Activated B cell treated with CpG ODN at 0.5 μM for 24 hours (primary cell): ENCODE measurements at regions of chr15 and their contacts with region 1.

Region 1: DNA sequence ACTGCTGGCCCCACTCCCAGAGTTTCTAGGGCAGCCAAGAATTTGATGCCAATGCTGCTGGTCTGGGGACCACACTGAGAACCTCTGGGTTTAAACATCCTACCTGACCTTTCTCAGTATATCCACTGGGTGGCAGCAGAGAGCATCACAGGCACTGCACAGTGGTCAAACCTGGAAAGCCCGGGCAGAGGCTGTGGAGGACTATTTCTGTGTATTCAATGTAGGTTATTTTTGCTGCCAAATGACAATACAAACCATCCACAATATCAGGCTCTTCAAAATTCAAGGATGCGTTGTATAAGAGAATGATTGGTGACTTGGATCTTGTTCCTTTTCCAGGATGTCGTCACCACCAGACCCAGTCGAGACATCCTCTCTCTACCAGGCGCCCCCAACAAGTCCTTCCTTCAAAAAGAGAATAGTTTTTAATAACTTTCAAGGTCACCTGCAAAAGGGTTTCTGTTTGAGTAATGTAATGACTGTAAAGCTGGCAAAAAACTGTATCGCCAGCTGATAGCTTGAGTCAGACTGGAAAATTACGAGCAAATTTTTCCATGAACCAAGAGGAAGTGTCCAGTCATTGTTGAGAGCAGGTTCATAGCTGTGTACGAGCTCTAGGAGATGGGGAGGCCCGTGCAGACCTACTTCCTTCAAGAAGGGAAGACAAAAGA is 30.5 kb upstream of the MYZAP start:
- DNase-seq: peak; percentile 32
- ATAC-seq: peak; percentile 84
- H3K4me3 Mint-ChIP-seq: peak overlapping the region; percentile 56
- H3K27ac Mint-ChIP-seq: peak overlapping the region; percentile 68
- H3K4me1 Mint-ChIP-seq: peaks cover 37% of the 10 kb centered on the region
- H3K27me3 Mint-ChIP-seq: peaks cover 6% of the 10 kb centered on the region
- CTCF ChIP-seq: peak; percentile 53

Region 2: DNA sequence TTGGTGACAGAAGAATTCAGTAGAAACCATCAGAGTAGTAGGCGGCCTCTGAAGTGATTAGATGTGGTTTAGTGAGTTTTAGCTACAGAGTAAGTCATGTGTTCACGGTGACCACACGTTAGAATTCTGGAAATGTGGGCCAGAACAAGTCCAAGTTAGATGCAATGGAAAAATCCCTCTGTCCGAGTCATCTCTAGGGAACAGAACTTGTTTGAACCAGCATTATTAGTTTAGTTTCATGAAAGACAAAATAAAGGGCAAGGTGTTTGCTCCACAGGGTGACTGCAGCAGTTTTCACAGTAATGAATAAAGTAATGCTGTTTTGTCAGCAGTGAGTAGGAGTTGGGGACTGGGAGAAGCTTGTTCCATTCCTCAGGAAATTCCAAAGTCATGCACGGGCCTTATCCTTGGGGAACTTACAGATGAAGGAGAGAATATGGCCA is 84.6 kb before region 1 on chr15:
- CTCF ChIA-PET with region 1: no interaction called
- POLR2A ChIA-PET with region 1: no interaction called
- intact Hi-C with region 1: no loop called
- DNase-seq: no peak
- ATAC-seq: no peak
- H3K4me3 Mint-ChIP-seq: no peak overlapping the region
- H3K27ac Mint-ChIP-seq: no peak overlapping the region
- H3K4me1 Mint-ChIP-seq: no peaks in the 10 kb centered on the region
- H3K27me3 Mint-ChIP-seq: no peaks in the 10 kb centered on the region
- CTCF ChIP-seq: no peak

Region 3: GRCh38 chr15:57591646-57592367 is 30.6 kb after region 1 on chr15 and contains the start of gene MYZAP:
- CTCF ChIA-PET with region 1: interaction called, 3 read pairs
- POLR2A ChIA-PET with region 1: interaction called, 8 read pairs
- intact Hi-C with region 1: loop called (anchors 1 kb)
- DNase-seq: peak; percentile 59
- ATAC-seq: peak; percentile 83
- H3K4me3 Mint-ChIP-seq: peak within 1 kb of the TSS; percentile 81
- H3K27ac Mint-ChIP-seq: peak within 1 kb of the TSS; percentile 48
- H3K4me1 Mint-ChIP-seq: peaks cover 51% of the 10 kb centered on the region
- H3K27me3 Mint-ChIP-seq: peaks cover 3% of the 10 kb centered on the region
- CTCF ChIP-seq: no peak
- total RNA-seq, gene MYZAP: 0.88 and 1.00 TPM in 2 replicates

Region 4: DNA sequence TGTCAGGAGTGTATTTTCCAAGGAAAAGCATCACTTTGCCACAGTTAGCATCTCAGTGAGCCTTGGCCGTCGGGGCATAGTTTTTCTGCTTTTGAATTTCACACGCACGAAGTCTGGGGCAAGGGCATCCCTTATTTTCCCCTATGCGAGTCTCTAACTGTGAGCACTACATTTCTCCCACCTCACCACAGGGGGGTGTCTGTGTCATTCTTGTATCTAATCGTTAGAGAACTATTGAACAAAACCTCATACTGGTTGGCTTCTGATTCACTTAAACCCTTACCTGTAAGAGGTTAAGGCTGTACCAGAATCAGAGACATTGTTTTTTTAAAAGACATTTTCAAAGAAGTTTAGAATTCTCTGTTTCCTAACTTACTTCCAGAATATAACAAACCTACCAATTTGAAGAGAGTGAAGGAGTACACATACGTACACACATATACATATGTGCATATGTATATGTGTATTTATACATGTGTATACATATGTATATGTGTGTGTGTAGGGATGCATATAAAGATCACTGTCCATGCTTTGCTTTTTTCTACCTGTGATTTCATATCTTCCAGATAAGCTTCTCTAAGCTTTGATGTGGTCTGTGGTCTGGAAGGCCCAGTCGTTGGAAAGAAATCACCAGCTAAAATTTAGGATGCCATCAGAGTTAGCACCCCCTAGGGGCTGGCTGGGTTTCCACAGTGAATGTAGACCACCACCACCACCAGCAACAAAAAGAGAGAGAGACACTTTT is 79.9 kb after region 1 on chr15:
- CTCF ChIA-PET with region 1: interaction called, 4 read pairs
- POLR2A ChIA-PET with region 1: no interaction called
- intact Hi-C with region 1: loop called (anchors 1 kb)
- DNase-seq: no peak
- ATAC-seq: no peak
- H3K4me3 Mint-ChIP-seq: no peak overlapping the region
- H3K27ac Mint-ChIP-seq: no peak overlapping the region
- H3K4me1 Mint-ChIP-seq: peaks cover 2% of the 10 kb centered on the region
- H3K27me3 Mint-ChIP-seq: no peaks in the 10 kb centered on the region
- CTCF ChIP-seq: no peak

Region 5: DNA sequence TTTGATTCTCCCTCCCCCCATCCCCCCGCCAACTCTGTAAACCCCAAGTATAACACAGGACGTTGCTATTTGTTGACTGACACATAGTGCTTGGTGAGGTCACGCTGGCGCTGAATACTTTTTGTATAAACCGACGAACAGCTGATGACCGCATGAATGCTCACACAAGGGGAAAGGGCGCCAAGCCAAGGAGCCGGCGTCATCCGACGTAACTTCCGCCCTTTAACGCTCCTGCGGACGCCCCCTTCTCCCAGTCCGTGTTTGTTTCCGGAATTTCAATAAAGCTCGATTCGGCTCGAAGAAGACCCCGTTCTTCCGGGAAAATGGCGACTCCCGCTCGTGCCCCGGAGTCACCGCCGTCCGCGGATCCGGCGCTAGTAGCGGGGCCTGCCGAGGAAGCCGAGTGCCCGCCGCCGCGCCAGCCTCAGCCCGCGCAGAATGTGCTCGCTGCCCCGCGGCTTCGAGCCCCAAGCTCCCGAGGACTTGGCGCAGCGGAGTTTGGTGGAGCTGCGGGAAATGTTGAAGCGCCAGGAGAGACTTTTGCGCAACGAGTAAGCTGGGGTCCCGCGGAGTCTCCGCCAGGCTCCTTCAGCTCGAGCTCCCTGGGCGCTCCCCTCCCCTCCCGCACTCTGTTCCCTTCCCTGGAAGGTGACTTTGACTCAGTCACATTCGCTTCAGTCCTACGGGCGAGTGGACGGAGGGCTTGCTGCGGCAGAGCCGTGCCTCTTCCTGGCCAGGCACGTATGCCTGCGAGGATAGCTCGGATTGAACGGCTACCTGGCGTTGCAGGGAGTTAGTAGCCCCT is 145.4 kb after region 1 on chr15 and contains the start of gene POLR2M:
- CTCF ChIA-PET with region 1: interaction called, 7 read pairs
- POLR2A ChIA-PET with region 1: interaction called, 12 read pairs
- intact Hi-C with region 1: loop called (anchors 1 kb)
- DNase-seq: peak; percentile 71
- ATAC-seq: peak; percentile 92
- H3K4me3 Mint-ChIP-seq: peak within 1 kb of the TSS; percentile 87
- H3K27ac Mint-ChIP-seq: peak within 1 kb of the TSS; percentile 88
- H3K4me1 Mint-ChIP-seq: peaks cover 36% of the 10 kb centered on the region
- H3K27me3 Mint-ChIP-seq: peaks cover 6% of the 10 kb centered on the region
- CTCF ChIP-seq: no peak
- total RNA-seq, gene POLR2M: 53.8 and 65.2 TPM in 2 replicates

Region 6: GRCh38 chr15:58066042-58066867 is 505.1 kb after region 1 on chr15:
- CTCF ChIA-PET with region 1: no interaction called
- POLR2A ChIA-PET with region 1: no interaction called
- intact Hi-C with region 1: loop called (anchors 5 kb)
- DNase-seq: peak; percentile 46
- ATAC-seq: peak; percentile 71
- H3K4me3 Mint-ChIP-seq: peak overlapping the region; percentile 53
- H3K27ac Mint-ChIP-seq: no peak overlapping the region
- H3K4me1 Mint-ChIP-seq: peaks cover 6% of the 10 kb centered on the region
- H3K27me3 Mint-ChIP-seq: peaks cover 58% of the 10 kb centered on the region
- CTCF ChIP-seq: no peak